ENCODE measurements at regions of chr18 and their contacts with region 1.

Region 1: DNA sequence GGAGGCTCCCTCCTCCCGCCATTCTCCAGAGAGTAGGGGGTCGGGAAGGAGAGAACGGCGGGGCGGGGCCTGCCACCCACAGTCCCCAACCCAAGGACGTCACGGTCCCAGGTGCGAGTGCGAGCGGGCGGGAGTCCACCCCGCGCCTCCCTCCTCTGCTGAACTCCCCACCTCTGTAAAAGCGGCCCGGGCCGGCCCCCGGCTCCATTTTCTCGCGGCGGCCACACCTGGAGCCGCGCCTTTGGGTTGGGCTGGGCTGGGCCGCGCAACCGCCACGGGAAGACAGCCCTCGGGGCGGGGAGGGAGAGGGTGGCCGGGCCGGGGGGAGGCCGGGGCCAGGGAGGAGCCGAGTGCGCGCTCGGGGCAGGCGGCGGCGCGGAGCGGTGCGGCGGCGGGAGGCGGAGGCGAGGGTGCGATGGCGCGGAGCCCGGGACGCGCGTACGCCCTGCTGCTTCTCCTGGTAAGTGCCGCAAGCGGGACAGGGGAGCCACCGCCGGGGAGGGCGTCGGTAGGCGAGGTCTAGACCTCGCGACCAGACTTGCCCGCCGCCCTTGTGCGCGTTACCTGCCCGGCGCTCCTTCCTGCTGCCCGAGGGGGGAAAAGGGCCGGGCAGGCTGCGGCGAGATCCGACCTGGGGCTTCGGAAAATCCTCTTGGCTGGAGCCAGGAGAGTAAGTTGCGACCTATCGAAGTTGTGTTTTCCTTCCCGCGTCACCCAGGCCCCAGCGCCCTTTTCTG is at the start of gene DSG2:
- DNase-seq: peak; percentile 51 to 74
- ATAC-seq: peak; percentile 89 to 99 (median 96)
- H3K4me3 ChIP-seq: peak within 1 kb of the TSS; percentile 32 to 78 (median 71)
- H3K27ac ChIP-seq: peak within 1 kb of the TSS; percentile 35 to 86 (median 74)
- H3K4me1 ChIP-seq: peaks cover 0 to 22% (median 5%) of the 10 kb centered on the region in 9 donors
- H3K27me3 ChIP-seq: peaks cover 0 to 44% (median 4%) of the 10 kb centered on the region in 7 donors
- CTCF ChIP-seq: no peak
- total RNA-seq, gene DSG2: 36.0 to 53.8 (median 41.4) TPM

Region 2: DNA sequence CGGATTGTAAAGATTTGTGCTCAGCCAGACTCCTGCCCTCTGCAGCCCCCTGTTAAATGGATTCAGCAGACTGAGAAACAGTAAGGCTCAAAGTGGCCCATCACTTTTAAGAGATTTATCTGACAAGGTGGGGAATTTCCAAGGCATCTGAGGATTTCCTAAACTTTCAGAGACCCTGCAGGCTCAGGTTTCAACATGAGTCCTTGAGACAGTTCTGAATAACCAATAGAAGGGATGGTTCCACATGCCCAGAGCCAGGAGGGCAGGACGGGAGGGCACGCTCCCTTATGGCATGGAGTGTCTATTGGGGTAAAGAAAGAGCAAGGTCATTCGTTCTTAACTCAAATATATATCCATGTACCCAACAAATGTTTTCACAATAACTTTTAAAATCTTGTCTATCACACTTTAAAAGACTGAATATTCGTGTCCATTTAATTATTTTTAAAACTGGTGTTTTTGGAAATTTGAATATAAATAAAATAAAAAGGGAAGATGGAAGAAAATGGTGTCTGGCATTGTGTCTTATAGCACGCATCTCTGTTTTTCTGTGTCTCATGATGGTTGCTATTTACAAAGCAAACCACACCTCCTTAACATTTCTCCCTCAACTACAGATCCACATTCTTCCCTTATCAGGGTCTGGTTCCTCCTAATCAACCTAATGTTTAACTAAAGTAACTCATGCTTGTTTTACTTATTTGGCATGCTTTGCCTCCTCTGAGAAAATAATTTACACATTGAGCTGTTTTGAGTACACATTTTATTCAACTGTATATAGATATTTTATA is 236.0 kb before region 1 on chr18:
- intact Hi-C with region 1: loop called in 1 of 10 experiments (anchors 5 kb)
- DNase-seq: no peak
- ATAC-seq: peak in 2 of 8 donors; percentile 62 to 64
- H3K4me3 ChIP-seq: no peak overlapping the region
- H3K27ac ChIP-seq: no peak overlapping the region
- H3K4me1 ChIP-seq: peaks cover 0 to 3% (median 0%) of the 10 kb centered on the region in 9 donors
- H3K27me3 ChIP-seq: no peaks in the 10 kb centered on the region
- CTCF ChIP-seq: no peak

Region 3: DNA sequence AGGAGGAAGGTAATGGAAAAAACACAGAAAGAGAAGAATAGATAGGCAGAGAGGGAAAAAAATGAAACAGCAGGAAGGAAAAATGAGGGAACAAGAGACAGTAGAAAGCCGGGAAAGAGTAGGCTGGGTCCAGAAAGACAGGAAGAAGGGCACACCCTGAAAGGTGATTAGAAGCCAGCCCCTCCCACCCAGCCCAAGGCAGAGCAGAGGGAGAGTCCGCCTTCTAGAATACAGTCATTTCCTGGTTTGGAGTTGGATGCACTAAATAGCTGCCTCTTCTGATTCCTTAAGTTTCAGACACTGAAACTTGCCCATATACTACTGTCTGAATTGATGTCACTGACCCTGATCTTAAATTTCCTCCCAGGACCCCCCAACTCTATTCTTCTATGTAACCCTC is 68.4 kb before region 1 on chr18:
- intact Hi-C with region 1: loop called in 2 of 10 experiments (anchors 5 to 10 kb)
- DNase-seq: no peak
- ATAC-seq: peak in 1 of 8 donors; percentile 39
- H3K4me3 ChIP-seq: no peak overlapping the region
- H3K27ac ChIP-seq: no peak overlapping the region
- H3K4me1 ChIP-seq: no peaks in the 10 kb centered on the region
- H3K27me3 ChIP-seq: no peaks in the 10 kb centered on the region
- CTCF ChIP-seq: no peak

Measured in heart right ventricle (tissue), 16 donors.